Ovary (tissue), 10 donors: ENCODE measurements at regions of chr2 and their contacts with region 1.

Region 1: DNA sequence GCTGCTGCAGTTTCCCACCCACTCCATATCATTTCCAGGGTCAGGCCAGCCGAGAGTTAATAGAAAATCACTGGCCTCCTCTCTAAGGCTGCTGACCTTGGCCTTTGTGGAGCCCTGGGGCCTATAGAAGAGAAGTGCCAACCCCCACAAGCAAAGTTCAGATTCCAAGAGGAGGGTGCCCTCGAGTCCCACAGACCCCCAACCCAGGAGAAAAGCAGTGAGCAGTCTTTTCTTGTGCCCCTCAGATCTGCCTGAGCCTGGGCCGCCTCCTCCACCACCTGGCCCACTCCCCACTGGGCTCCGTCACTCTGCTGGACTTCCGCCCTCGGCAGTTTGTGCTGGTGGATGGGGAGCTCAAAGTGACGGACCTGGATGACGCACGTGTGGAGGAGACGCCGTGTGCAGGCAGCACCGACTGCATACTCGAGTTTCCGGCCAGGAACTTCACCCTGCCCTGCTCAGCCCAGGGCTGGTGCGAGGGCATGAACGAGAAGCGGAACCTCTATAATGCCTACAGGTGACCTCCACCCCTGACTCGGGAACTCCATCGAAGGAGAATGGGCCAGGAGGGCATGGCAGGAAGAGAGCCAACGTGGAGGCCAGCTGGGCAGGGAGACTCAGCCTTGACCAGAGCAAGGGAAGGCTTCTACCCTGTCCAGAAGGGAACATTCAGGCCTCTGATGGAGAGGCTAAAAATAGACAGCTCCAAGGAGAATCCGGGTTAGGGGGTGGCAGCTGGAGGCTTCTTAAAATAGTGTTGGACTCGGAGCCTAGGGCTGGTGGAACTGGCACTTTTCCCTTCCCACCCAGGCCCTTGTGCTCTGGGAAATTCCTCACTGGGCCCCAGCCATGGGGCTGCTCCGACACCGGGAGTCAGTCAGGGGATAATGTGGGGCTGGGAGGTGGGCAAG is 6.2 kb downstream of the PKDCC start:
- DNase-seq: peak; percentile 78 to 82 (median 79)
- H3K4me3 ChIP-seq: no peak overlapping the region
- H3K27ac ChIP-seq: peak overlapping the region; percentile 85 to 86
- H3K4me1 ChIP-seq: peaks cover 36% of the 10 kb centered on the region
- H3K27me3 ChIP-seq: no peaks in the 10 kb centered on the region
- CTCF ChIP-seq: no peak
- EP300 ChIP-seq: no peak
- POLR2A ChIP-seq: no peak

Region 2: DNA sequence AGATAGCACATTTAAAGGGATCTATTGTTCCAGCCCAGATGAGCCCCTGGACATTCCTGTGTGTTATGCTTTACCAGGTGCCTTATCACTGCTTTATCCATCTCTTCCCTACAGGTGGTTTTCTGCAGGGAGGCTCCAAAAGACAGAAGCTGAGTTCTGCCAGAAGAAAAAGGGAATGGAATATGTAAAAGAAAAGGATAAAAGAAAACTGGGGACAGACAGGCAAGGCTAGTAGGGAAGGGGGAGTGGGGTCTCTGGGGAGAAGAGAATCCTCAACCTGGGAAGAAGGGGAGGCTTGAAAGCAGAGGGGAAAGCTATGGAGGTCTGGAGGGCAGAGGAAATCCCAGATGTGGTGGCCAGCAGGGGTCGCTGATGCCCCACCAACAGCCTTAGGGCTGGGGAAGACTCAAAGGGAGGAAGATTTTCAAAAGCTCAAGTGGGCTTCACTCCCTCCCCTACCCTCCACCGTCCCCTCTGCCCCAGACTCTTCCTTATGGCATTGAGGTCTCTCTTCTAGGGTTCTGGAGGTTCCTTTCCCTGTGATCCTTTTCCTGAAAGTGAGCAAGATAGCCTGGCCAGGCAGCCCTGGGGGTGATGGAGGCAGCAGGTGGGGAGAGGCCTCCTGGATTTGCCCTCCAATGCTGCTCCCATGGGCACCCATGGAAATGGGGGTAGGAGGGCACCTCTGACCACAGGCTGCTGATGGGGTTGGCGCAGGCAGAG is 184.3 kb before region 1 on chr2:
- intact Hi-C with region 1: loop called in 1 of 4 experiments (anchors 10 kb)
- DNase-seq: peak; percentile 76 to 92 (median 89)
- H3K4me3 ChIP-seq: no peak overlapping the region
- H3K27ac ChIP-seq: peak overlapping the region; percentile 1 to 14
- H3K4me1 ChIP-seq: peaks cover 10% of the 10 kb centered on the region
- H3K27me3 ChIP-seq: no peaks in the 10 kb centered on the region
- CTCF ChIP-seq: peak; percentile 76 to 85 (median 79)
- EP300 ChIP-seq: no peak
- POLR2A ChIP-seq: peak; percentile 1

Region 3: GRCh38 chr2:41922177-41922576 is 131.9 kb before region 1 on chr2:
- intact Hi-C with region 1: no loop called
- DNase-seq: no peak
- H3K4me3 ChIP-seq: no peak overlapping the region
- H3K27ac ChIP-seq: no peak overlapping the region
- H3K4me1 ChIP-seq: peaks cover 9% of the 10 kb centered on the region
- H3K27me3 ChIP-seq: no peaks in the 10 kb centered on the region
- CTCF ChIP-seq: no peak
- EP300 ChIP-seq: no peak
- POLR2A ChIP-seq: no peak

Region 4: DNA sequence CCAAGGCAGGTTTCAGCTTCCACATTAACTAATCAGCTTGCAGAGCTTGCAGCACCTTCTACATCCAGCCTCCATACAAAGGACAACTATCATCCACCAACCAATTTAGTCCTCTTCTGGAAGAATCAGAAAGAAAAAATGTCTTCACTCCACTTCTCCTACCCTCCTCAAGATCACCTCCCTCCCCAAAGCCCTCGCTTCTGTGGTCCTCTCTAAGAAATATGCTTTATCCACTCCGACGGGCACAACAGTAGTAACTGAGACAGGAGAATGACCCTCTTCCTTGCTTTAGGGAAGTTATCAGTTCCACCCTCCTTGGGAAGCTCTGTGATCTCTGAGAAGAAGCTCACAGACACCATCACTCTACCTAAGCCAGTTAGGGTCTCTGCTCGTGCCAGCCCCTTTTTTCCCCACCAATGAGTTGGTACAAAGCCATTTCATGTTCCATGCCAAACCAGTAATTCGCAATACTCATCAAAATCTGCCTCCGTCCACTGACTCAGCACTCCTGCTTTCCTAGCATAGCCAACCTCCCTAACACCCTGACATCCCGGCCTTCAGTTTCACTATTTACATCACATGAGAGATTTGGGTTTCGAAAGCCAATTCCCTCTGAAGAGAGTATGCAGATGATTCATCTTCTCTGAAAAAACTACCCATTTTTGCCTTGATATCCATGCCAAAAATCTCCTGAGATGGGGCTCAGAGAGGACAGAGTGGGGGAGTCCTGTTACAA is 120.3 kb before region 1 on chr2:
- intact Hi-C with region 1: loop called in 3 of 4 experiments (anchors 2 to 10 kb)
- DNase-seq: peak in 4 of 5 donors; percentile 57 to 79 (median 68)
- H3K4me3 ChIP-seq: no peak overlapping the region
- H3K27ac ChIP-seq: peak overlapping the region; percentile 41 to 88
- H3K4me1 ChIP-seq: peaks cover 39% of the 10 kb centered on the region
- H3K27me3 ChIP-seq: no peaks in the 10 kb centered on the region
- CTCF ChIP-seq: no peak
- EP300 ChIP-seq: peak; percentile 1
- POLR2A ChIP-seq: no peak

Region 5: GRCh38 chr2:41966431-41966893 is 87.6 kb before region 1 on chr2:
- intact Hi-C with region 1: loop called in 1 of 4 experiments (anchors 10 kb)
- DNase-seq: peak; percentile 75 to 84 (median 83)
- H3K4me3 ChIP-seq: no peak overlapping the region
- H3K27ac ChIP-seq: peak overlapping the region in 1 of 2 donors; percentile 86
- H3K4me1 ChIP-seq: peaks cover 36% of the 10 kb centered on the region
- H3K27me3 ChIP-seq: no peaks in the 10 kb centered on the region
- CTCF ChIP-seq: no peak
- EP300 ChIP-seq: no peak
- POLR2A ChIP-seq: no peak

Region 6: DNA sequence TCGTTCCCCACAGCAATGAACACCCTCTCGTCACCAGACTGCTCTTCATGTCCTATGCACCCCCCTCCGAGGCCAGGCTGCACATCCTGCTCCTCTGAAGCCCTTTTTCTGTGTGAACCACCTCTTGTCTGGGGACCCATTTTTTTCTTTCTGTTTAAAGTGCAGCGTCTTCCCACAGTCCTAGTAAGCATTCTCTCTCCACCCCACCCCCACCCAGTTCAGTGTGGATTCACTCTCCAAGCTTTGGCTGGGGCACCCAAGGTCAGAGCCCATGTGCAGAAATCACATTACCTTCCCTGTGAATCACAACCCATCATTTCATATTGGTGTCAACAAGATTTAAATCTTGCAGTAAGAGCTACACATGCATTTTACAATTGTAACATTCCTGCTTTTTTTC is 32.6 kb before region 1 on chr2:
- intact Hi-C with region 1: no loop called
- DNase-seq: peak; percentile 48 to 71 (median 54)
- H3K4me3 ChIP-seq: no peak overlapping the region
- H3K27ac ChIP-seq: peak overlapping the region in 1 of 2 donors; percentile 1
- H3K4me1 ChIP-seq: peaks cover 13% of the 10 kb centered on the region
- H3K27me3 ChIP-seq: no peaks in the 10 kb centered on the region
- CTCF ChIP-seq: no peak
- EP300 ChIP-seq: no peak
- POLR2A ChIP-seq: no peak